Endothelial cell of umbilical vein (primary cell): ENCODE measurements at regions of chr6 and their contacts with region 1.

Region 1: DNA sequence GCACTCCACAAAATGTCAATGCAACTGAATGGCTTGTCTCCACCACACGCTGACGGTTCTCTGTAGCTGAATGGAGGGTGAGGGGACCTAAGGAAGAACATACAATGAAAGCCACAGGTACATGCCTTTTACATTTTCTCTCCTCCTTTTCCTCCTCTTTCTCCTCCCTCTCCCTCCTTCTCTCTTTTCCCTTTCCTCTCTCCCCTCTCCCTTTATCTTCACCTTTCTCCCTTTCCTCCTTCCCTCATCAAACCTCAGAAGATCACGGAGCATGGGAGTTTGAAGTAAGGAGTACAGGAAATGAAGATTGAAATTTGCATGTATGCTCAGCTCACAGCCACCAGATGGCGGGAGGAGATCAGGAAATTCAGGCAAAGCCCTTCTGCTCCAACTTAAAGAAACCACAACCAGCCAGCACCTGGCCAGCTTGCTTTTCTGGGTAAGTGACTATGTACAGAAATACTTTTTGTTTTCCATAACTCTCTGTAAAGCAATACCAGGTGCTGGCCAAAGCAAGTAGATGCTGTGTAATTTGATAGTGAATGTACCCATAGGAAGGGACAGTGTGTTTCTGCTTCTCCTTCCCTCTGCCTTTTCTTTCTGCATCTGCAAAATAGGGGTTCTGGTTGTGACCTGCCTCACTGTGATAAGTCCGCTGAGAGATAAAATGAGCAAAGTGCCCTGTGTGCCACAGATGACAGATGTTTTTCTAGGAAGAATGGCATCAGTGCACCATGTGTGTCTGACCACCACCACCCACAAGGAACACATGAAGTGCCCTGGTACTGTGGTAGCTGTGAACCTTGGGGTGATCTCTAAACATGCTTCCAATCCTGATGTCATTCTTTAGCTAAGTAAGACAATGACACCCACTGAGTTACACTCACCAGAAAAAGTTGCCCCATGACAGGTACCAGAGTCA is 18.6 kb upstream of the FOXO3 start:
- DNase-seq: peak; percentile 83
- H3K4me3 ChIP-seq: no peak overlapping the region
- H3K27ac ChIP-seq: no peak overlapping the region
- H3K4me1 ChIP-seq: no peaks in the 10 kb centered on the region
- H3K27me3 ChIP-seq: peaks cover 0 to 8% of the 10 kb centered on the region in 2 experiments
- CTCF ChIP-seq: peak; percentile 71 to 80
- POLR2A ChIP-seq: no peak

Region 2: GRCh38 chr6:108463784-108464183 is 78.3 kb before region 1 on chr6:
- CTCF ChIA-PET with region 1: no interaction called
- POLR2A ChIA-PET with region 1: no interaction called
- dilution Hi-C with region 1: no loop called
- intact Hi-C with region 1: no loop called
- DNase-seq: peak; percentile 82
- H3K4me3 ChIP-seq: no peak overlapping the region
- H3K27ac ChIP-seq: no peak overlapping the region
- H3K4me1 ChIP-seq: peaks cover 4% of the 10 kb centered on the region
- H3K27me3 ChIP-seq: no peaks in the 10 kb centered on the region
- CTCF ChIP-seq: no peak
- POLR2A ChIP-seq: no peak

Region 3: DNA sequence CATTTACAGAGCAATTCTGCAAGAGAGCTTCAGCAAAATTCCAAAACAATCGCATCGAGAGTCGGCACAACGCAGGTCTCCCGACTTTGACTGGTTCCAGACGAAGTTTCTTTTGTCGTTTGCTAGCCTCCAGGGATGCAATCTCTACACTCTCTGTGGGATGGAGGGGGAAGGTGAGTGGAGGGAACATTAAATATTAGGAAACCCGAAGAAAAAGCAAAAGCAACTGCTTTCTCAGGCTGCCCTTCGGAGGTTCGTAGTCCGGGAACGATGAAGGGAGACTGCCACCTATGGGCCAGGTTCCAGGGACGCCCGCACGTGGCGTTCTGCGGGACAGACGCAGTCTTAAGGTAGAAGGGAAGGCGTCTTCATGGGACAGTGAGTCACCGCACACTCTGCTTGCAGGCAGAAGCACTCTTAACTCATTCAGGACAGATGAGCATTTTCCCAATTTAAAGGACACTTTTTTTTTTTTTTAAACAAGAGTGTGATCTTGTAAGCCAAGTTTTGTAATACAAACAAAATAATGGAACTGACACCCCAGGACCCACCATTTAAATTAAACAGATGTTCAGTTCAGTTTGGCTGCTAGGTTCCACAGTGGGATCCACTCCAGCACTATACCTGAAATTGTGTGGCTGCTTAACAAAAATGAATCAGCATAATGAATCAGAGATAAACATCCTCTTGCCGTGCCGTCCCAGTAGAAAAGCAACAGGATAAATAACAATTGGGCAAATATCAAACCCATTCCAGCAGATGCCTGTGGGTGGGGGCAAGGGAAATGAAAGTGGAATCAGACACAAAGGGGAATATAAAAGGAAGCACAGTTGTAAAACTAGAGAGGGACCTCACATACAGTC is 240.3 kb after region 1 on chr6:
- CTCF ChIA-PET with region 1: interaction called, 38 read pairs
- POLR2A ChIA-PET with region 1: no interaction called
- dilution Hi-C with region 1: no loop called
- intact Hi-C with region 1: loop called (anchors 1 kb)
- DNase-seq: peak; percentile 88
- H3K4me3 ChIP-seq: peak overlapping the region; percentile 56 to 79 (median 60)
- H3K27ac ChIP-seq: no peak overlapping the region
- H3K4me1 ChIP-seq: peaks cover 18% of the 10 kb centered on the region
- H3K27me3 ChIP-seq: no peaks in the 10 kb centered on the region
- CTCF ChIP-seq: peak; percentile 72 to 85
- POLR2A ChIP-seq: no peak

Region 4: DNA sequence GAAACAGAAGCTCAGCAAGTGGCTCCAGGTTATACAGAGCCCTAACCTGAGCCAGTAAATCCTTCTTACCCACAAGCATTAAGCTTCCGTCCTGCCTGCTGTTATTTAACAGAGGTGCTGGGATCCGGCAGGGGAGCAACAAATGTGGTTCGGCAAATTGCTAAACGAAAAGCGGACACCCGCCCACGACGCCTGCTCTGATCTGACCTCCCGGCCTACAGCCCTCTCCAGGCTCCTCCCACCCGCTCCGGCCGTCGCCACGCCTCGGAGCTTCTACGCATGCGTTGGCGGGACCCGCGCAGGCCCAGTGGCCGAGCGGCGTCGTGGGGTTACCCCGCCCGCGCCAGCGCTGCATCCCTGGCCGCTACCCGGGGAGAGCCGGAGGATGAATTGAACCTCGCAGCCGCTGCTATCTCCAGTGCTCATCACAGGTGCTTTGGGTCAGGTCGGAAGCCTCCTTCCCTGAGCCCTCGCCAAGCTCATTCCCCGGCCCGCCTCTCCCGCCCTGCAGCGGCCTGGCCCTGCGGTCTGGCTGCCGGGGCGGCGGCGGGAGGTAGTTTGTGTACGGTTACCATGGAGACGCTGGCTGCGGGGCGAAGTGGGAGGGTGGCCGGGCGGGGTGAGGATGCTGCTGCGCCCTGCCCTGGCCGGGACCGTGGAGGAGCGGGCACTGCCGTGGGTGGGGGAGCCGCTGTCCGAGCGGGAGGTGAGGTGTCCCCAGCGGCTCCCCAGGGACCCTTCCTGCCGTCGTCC is 306.2 kb after region 1 on chr6 and contains the start of gene ARMC2:
- CTCF ChIA-PET with region 1: interaction called, 11 read pairs
- POLR2A ChIA-PET with region 1: no interaction called
- dilution Hi-C with region 1: no loop called
- intact Hi-C with region 1: no loop called
- DNase-seq: peak; percentile 89
- H3K4me3 ChIP-seq: peak within 1 kb of the TSS; percentile 34 to 81 (median 62)
- H3K27ac ChIP-seq: peak within 1 kb of the TSS; percentile 19
- H3K4me1 ChIP-seq: peaks cover 6% of the 10 kb centered on the region
- H3K27me3 ChIP-seq: no peaks in the 10 kb centered on the region
- CTCF ChIP-seq: no peak
- POLR2A ChIP-seq: peak; percentile 67
- total RNA-seq, gene ARMC2: 3.7 and 3.9 TPM in 2 replicates

Region 5: GRCh38 chr6:108883172-108883571 is 341.1 kb after region 1 on chr6:
- CTCF ChIA-PET with region 1: interaction called, 15 read pairs
- POLR2A ChIA-PET with region 1: no interaction called
- dilution Hi-C with region 1: no loop called
- intact Hi-C with region 1: no loop called
- DNase-seq: no peak
- H3K4me3 ChIP-seq: no peak overlapping the region
- H3K27ac ChIP-seq: no peak overlapping the region
- H3K4me1 ChIP-seq: no peaks in the 10 kb centered on the region
- H3K27me3 ChIP-seq: no peaks in the 10 kb centered on the region
- CTCF ChIP-seq: no peak
- POLR2A ChIP-seq: no peak

Region 6: GRCh38 chr6:109073344-109074132 is 531.4 kb after region 1 on chr6:
- CTCF ChIA-PET with region 1: interaction called, 159 read pairs
- POLR2A ChIA-PET with region 1: no interaction called
- dilution Hi-C with region 1: no loop called
- intact Hi-C with region 1: loop called (anchors 1 kb)
- DNase-seq: peak; percentile 77
- H3K4me3 ChIP-seq: no peak overlapping the region
- H3K27ac ChIP-seq: no peak overlapping the region
- H3K4me1 ChIP-seq: peaks cover 5% of the 10 kb centered on the region
- H3K27me3 ChIP-seq: no peaks in the 10 kb centered on the region
- CTCF ChIP-seq: peak; percentile 32 to 55
- POLR2A ChIP-seq: no peak